ENCODE measurements at regions of chr1 and their contacts with region 1.

Region 1: GRCh38 chr1:28505406-28506187 is at the start of gene RCC1:
- DNase-seq: peak; percentile 98
- ATAC-seq: peak; percentile 94
- H3K4me3 ChIP-seq: peak within 1 kb of the TSS; percentile 60 to 84 (median 80)
- H3K4me3 Mint-ChIP-seq: peak within 1 kb of the TSS; percentile 97
- H3K27ac ChIP-seq: peak within 1 kb of the TSS; percentile 65 to 67
- H3K27ac Mint-ChIP-seq: peak within 1 kb of the TSS; percentile 98
- H3K4me1 ChIP-seq: peaks cover 38 to 48% of the 10 kb centered on the region in 2 donors
- H3K4me1 Mint-ChIP-seq: peaks cover 42% of the 10 kb centered on the region
- H3K27me3 ChIP-seq: no peaks in the 10 kb centered on the region
- H3K27me3 Mint-ChIP-seq: no peaks in the 10 kb centered on the region
- CTCF ChIP-seq: no peak
- total RNA-seq, gene RCC1: 16.3 and 17.5 TPM in 2 replicates

Region 2: GRCh38 chr1:28259307-28260167 is 246.1 kb before region 1 on chr1 and contains the start of gene SESN2:
- CTCF ChIA-PET with region 1: no interaction called
- POLR2A ChIA-PET with region 1: interaction called, 3 read pairs
- intact Hi-C with region 1: loop called (anchors 1 kb)
- DNase-seq: peak; percentile 98
- ATAC-seq: peak; percentile 99
- H3K4me3 ChIP-seq: peak within 1 kb of the TSS; percentile 65 to 96 (median 92)
- H3K4me3 Mint-ChIP-seq: peak within 1 kb of the TSS; percentile 84
- H3K27ac ChIP-seq: peak within 1 kb of the TSS in 1 of 2 donors; percentile 64
- H3K27ac Mint-ChIP-seq: peak within 1 kb of the TSS; percentile 75
- H3K4me1 ChIP-seq: peaks cover 22% of the 10 kb centered on the region in 2 donors
- H3K4me1 Mint-ChIP-seq: peaks cover 19% of the 10 kb centered on the region
- H3K27me3 ChIP-seq: peaks cover 0 to 4% (median 1%) of the 10 kb centered on the region in 4 experiments
- H3K27me3 Mint-ChIP-seq: peaks cover 16% of the 10 kb centered on the region
- CTCF ChIP-seq: no peak
- total RNA-seq, gene SESN2: 4.5 and 4.8 TPM in 2 replicates

Region 3: GRCh38 chr1:28518000-28518744 is 12.6 kb after region 1 on chr1:
- CTCF ChIA-PET with region 1: interaction called, 24 read pairs
- POLR2A ChIA-PET with region 1: interaction called, 4 read pairs
- intact Hi-C with region 1: loop called (anchors 1 kb)
- DNase-seq: peak; percentile 93
- ATAC-seq: peak; percentile 94
- H3K4me3 ChIP-seq: peak overlapping the region; percentile 53 to 68 (median 55)
- H3K4me3 Mint-ChIP-seq: peak overlapping the region; percentile 89
- H3K27ac ChIP-seq: peak overlapping the region in 1 of 2 donors; percentile 45
- H3K27ac Mint-ChIP-seq: peak overlapping the region; percentile 89
- H3K4me1 ChIP-seq: peaks cover 11 to 18% of the 10 kb centered on the region in 2 donors
- H3K4me1 Mint-ChIP-seq: peaks cover 30% of the 10 kb centered on the region
- H3K27me3 ChIP-seq: no peaks in the 10 kb centered on the region
- H3K27me3 Mint-ChIP-seq: no peaks in the 10 kb centered on the region
- CTCF ChIP-seq: peak; percentile 98

Region 4: DNA sequence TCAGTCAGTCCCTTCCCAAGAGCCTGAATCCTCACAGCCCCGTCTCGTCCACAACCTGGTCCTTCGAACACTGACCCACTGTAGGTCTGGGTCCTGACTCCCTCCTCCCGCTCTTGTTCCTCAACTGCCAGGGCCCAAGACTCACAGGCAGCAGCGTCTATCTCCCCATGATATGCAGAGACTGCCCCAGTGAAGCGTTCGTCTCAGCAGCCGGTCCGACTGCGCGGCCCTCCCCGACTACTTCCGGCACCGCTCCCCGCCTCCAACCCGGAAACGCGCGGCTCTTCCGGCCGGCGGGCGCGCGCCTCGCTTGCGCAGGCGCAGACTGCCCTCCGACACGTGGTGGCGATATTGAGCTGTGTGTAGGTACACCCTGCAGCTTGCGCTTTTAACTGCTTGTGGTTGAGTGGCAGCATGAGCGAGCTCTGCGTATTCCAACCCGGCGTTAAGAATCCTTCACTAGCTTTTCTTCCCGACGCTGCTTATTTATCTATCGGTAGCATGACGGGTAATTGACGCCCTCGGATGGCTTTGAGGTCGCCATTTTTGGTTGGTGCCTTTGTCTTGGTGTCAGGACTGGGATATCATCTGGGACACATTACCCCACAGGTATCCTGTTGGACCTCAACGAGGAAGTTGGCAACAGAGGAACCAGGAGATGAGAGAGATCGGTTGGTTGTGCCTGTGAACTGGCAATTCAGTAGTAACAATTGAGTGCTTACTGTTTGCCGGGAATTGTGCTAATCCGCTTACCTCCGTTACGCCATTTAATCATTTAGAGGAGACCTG is 137.4 kb after region 1 on chr1 and contains the start of gene TAF12:
- CTCF ChIA-PET with region 1: no interaction called
- POLR2A ChIA-PET with region 1: interaction called, 4 read pairs
- intact Hi-C with region 1: loop called (anchors 1 kb)
- DNase-seq: peak; percentile 97
- ATAC-seq: peak; percentile 84
- H3K4me3 ChIP-seq: peak within 1 kb of the TSS; percentile 67 to 91 (median 89)
- H3K4me3 Mint-ChIP-seq: peak within 1 kb of the TSS; percentile 100
- H3K27ac ChIP-seq: peak within 1 kb of the TSS; percentile 97 to 100
- H3K27ac Mint-ChIP-seq: peak within 1 kb of the TSS; percentile 99
- H3K4me1 ChIP-seq: peaks cover 29 to 31% of the 10 kb centered on the region in 2 donors
- H3K4me1 Mint-ChIP-seq: peaks cover 49% of the 10 kb centered on the region
- H3K27me3 ChIP-seq: no peaks in the 10 kb centered on the region
- H3K27me3 Mint-ChIP-seq: no peaks in the 10 kb centered on the region
- CTCF ChIP-seq: peak; percentile 54
- total RNA-seq, gene TAF12: 18.5 and 19.1 TPM in 2 replicates

Region 5: GRCh38 chr1:29181413-29182225 is 676.0 kb after region 1 on chr1 and contains the start of gene SRSF4:
- CTCF ChIA-PET with region 1: no interaction called
- POLR2A ChIA-PET with region 1: interaction called, 4 read pairs
- intact Hi-C with region 1: loop called (anchors 5 kb)
- DNase-seq: peak; percentile 99
- ATAC-seq: peak; percentile 93
- H3K4me3 ChIP-seq: peak within 1 kb of the TSS; percentile 85 to 100 (median 95)
- H3K4me3 Mint-ChIP-seq: peak within 1 kb of the TSS; percentile 94
- H3K27ac ChIP-seq: peak within 1 kb of the TSS; percentile 99
- H3K27ac Mint-ChIP-seq: peak within 1 kb of the TSS; percentile 95
- H3K4me1 ChIP-seq: peaks cover 32 to 42% of the 10 kb centered on the region in 2 donors
- H3K4me1 Mint-ChIP-seq: peaks cover 42% of the 10 kb centered on the region
- H3K27me3 ChIP-seq: no peaks in the 10 kb centered on the region
- H3K27me3 Mint-ChIP-seq: no peaks in the 10 kb centered on the region
- CTCF ChIP-seq: peak; percentile 79
- total RNA-seq, gene SRSF4: 93.5 and 100 TPM in 2 replicates